Calu3 (cell line): ENCODE measurements at regions of chr7 and their contacts with region 1.

Region 1: GRCh38 chr7:41005381-41005911 is 697.4 kb downstream of the INHBA start:
- DNase-seq: peak; percentile 68
- H3K4me3 Mint-ChIP-seq: peak overlapping the region; percentile 27
- H3K27ac Mint-ChIP-seq: peak overlapping the region; percentile 96
- H3K4me1 Mint-ChIP-seq: peaks cover 80% of the 10 kb centered on the region
- H3K27me3 Mint-ChIP-seq: no peaks in the 10 kb centered on the region
- CTCF ChIP-seq: no peak

Region 2: GRCh38 chr7:40530292-40530691 is 475.2 kb before region 1 on chr7:
- CTCF ChIA-PET with region 1: no interaction called
- intact Hi-C with region 1: no loop called
- DNase-seq: no peak
- H3K4me3 Mint-ChIP-seq: no peak overlapping the region
- H3K27ac Mint-ChIP-seq: no peak overlapping the region
- H3K4me1 Mint-ChIP-seq: no peaks in the 10 kb centered on the region
- H3K27me3 Mint-ChIP-seq: peaks cover 13% of the 10 kb centered on the region
- CTCF ChIP-seq: no peak

Region 3: GRCh38 chr7:40682696-40683095 is 322.8 kb before region 1 on chr7:
- CTCF ChIA-PET with region 1: no interaction called
- intact Hi-C with region 1: no loop called
- DNase-seq: no peak
- H3K4me3 Mint-ChIP-seq: no peak overlapping the region
- H3K27ac Mint-ChIP-seq: no peak overlapping the region
- H3K4me1 Mint-ChIP-seq: no peaks in the 10 kb centered on the region
- H3K27me3 Mint-ChIP-seq: no peaks in the 10 kb centered on the region
- CTCF ChIP-seq: no peak

Region 4: DNA sequence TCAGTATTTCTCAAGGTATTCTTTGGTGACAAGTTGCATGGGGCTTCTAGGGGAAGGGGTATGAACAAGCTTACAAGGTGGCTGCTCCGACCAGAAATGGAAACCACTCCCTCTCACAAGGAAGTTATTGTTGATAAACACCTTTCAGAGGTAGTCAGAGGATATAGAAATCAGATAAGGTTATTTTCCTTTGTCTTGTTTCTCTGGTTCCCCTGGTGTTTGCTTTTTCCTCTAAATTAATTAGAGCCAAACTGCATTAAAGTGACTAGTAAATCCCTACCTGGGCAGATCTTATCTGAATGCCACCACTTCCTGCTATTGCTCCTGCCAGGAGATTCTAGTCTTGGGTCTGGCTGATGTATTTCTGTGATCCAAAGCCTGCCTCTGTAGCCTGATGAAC is 27.9 kb before region 1 on chr7:
- CTCF ChIA-PET with region 1: interaction called, 9 read pairs
- intact Hi-C with region 1: loop called (anchors 1 kb)
- DNase-seq: peak; percentile 46
- H3K4me3 Mint-ChIP-seq: no peak overlapping the region
- H3K27ac Mint-ChIP-seq: peak overlapping the region; percentile 81
- H3K4me1 Mint-ChIP-seq: peaks cover 27% of the 10 kb centered on the region
- H3K27me3 Mint-ChIP-seq: no peaks in the 10 kb centered on the region
- CTCF ChIP-seq: no peak

Region 5: DNA sequence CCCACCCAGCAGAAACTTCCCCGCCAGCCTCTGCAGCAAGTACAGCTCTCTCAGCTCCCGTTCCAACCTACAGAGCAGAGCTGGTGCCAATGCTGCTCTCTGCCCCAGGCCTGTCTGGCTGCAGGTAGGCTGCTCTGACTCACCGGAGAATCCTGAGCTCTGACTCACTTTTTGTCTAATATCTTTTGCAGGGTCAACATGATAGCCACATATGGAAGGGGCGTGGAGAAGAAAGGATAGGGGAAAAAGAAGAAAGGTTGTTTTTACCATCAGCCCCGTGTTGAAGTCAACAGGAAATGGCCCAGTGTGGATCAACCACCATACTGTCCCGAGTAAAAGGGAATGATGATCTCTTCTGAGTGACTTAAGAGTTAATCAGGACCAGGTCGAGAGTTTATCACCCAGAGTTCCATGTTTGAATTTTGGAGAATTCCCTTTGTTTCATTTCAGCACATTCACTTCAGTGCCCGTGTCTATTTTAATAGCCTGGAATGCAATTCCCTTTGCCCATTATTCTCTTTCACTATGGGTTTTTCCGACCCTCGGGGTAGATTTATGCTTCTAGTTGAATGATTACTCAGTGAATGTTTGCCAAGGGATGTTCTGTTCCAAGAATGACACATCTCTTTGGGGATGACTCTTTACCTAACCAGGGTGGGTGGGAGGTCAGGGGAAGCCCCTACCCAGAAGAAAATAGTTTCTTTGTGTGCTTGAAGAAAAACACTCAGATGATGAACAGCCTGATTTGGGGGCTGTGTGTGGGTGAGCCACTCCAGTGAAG is 102.4 kb after region 1 on chr7:
- CTCF ChIA-PET with region 1: no interaction called
- intact Hi-C with region 1: loop called (anchors 2 kb)
- DNase-seq: peak; percentile 91
- H3K4me3 Mint-ChIP-seq: peak overlapping the region; percentile 53
- H3K27ac Mint-ChIP-seq: peak overlapping the region; percentile 96
- H3K4me1 Mint-ChIP-seq: peaks cover 70% of the 10 kb centered on the region
- H3K27me3 Mint-ChIP-seq: no peaks in the 10 kb centered on the region
- CTCF ChIP-seq: no peak

Region 6: DNA sequence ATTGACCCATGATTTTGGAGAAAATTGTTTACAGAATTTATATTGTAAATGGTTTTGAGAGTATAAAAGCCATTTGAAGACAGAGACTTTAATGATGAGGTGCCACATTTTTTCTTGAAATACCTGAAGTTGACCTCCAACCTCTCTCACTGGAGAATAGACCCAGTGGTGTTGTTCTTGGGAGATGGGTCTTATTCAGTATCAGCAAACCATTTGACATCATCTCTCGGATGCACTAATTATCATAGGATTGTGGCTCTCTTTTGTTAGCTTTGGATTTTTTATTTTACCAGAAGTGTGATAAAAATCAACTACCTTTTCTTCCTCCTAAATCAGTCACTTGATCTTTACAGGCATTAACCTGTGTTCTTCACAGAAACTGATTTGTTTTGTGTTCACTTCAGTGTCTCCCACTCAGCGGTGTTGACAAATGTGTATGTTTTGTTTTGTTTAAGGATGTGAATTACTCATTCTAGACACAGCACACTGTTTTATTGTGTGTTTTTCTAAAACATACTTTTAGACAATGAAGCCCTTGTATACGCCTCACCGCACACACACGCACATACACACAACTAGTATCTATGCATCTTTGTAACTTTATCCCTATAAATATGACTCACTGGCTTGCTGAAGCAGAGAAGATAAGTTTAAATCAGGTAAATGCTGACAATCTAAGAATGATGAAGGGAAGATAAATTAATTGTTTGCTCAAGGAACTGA is 241.9 kb after region 1 on chr7:
- CTCF ChIA-PET with region 1: no interaction called
- intact Hi-C with region 1: loop called (anchors 5 kb)
- DNase-seq: peak; percentile 69
- H3K4me3 Mint-ChIP-seq: peak overlapping the region; percentile 22
- H3K27ac Mint-ChIP-seq: peak overlapping the region; percentile 96
- H3K4me1 Mint-ChIP-seq: peaks cover 42% of the 10 kb centered on the region
- H3K27me3 Mint-ChIP-seq: no peaks in the 10 kb centered on the region
- CTCF ChIP-seq: no peak